ENCODE measurements at regions of chr1 and their contacts with region 1.

Region 1: GRCh38 chr1:15028102-15028501 is 125.4 kb upstream of the TMEM51 start:
- DNase-seq: peak; percentile 67 to 92
- H3K4me3 ChIP-seq: no peak overlapping the region
- CTCF ChIP-seq: no peak
- POLR2A ChIP-seq: no peak

Region 2: DNA sequence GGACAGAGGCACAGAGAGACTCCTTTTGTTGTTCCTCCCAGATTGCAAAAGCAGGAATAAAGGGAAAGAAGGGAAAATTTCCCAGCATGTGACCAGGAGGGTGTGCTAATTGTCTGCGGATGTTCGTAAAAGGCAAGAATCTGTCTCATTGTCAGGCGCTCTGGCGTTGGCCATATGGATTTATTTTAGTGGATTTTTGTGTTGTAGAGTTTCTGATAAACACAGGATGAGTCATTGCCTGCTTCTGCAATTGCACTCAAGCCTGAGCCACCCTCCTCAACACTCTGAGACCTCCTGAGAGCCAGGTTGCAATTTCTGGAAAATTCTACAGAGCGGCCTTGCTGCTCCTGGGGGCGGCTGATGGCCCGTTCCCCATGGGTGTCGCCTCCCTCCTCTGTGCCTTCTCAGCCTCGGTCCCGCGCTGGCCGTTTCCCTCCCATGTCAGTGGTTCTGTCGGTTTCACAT is 201.9 kb before region 1 on chr1:
- intact Hi-C with region 1: loop called (anchors 5 kb)
- DNase-seq: peak; percentile 84 to 91
- H3K4me3 ChIP-seq: no peak overlapping the region
- CTCF ChIP-seq: no peak
- POLR2A ChIP-seq: no peak

Region 3: DNA sequence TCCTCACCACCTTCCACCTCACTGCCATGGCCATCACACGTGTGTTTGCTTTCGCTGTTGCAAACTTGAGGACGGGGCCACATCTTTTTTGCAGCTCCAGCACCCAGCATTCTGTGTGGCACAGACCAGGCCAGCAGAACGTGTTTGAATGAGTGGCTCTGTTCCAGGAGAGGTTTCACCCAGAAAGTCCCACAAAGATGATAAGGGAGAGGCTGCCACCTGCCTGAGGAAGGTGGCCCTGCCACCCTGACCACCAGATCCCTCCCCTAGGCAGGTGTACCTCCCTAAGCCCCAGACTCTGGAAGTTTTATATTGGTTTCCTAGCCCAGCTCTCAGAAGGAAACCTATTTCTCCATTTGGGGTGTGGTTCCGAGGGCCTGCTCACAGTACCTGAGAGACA is 177.5 kb before region 1 on chr1:
- intact Hi-C with region 1: no loop called
- DNase-seq: no peak
- H3K4me3 ChIP-seq: no peak overlapping the region
- CTCF ChIP-seq: no peak
- POLR2A ChIP-seq: no peak

Region 4: GRCh38 chr1:14923727-14924452 is 104.2 kb before region 1 on chr1:
- intact Hi-C with region 1: loop called (anchors 5 kb)
- DNase-seq: peak in 1 of 2 donors; percentile 93
- H3K4me3 ChIP-seq: no peak overlapping the region
- CTCF ChIP-seq: no peak
- POLR2A ChIP-seq: no peak